Psoas muscle (tissue), 8 donors: ENCODE measurements at regions of chr21 and their contacts with region 1.

Region 1: GRCh38 chr21:45287438-45288391 is at the start of gene POFUT2:
- DNase-seq: peak; percentile 97 to 99
- ATAC-seq: peak; percentile 92 to 96 (median 94)
- H3K4me3 ChIP-seq: peak within 1 kb of the TSS; percentile 75
- H3K27ac ChIP-seq: peak within 1 kb of the TSS; percentile 71
- H3K4me1 ChIP-seq: peaks cover 16% of the 10 kb centered on the region
- H3K27me3 ChIP-seq: no peaks in the 10 kb centered on the region
- CTCF ChIP-seq: no peak
- total RNA-seq, gene POFUT2: 5.6 to 13.9 (median 9.4) TPM

Region 2: GRCh38 chr21:44939532-44940115 is 348.1 kb before region 1 on chr21 and contains the start of gene SLX9:
- intact Hi-C with region 1: loop called (anchors 5 to 10 kb)
- DNase-seq: peak; percentile 80 to 89
- ATAC-seq: peak; percentile 92 to 98 (median 95)
- H3K4me3 ChIP-seq: peak within 1 kb of the TSS; percentile 96
- H3K27ac ChIP-seq: peak within 1 kb of the TSS; percentile 78
- H3K4me1 ChIP-seq: peaks cover 17% of the 10 kb centered on the region
- H3K27me3 ChIP-seq: no peaks in the 10 kb centered on the region
- CTCF ChIP-seq: no peak
- total RNA-seq, gene SLX9: 26.3 to 58.0 (median 32.5) TPM

Region 3: GRCh38 chr21:45439161-45439872 is 151.6 kb after region 1 on chr21:
- intact Hi-C with region 1: loop called (anchors 1 to 2 kb)
- DNase-seq: peak; percentile 84 to 92
- ATAC-seq: peak; percentile 83 to 96 (median 88)
- H3K4me3 ChIP-seq: peak overlapping the region; percentile 60
- H3K27ac ChIP-seq: peak overlapping the region; percentile 64
- H3K4me1 ChIP-seq: peaks cover 11% of the 10 kb centered on the region
- H3K27me3 ChIP-seq: peaks cover 0 to 28% (median 0%) of the 10 kb centered on the region in 3 donors
- CTCF ChIP-seq: peak; percentile 98

Region 4: DNA sequence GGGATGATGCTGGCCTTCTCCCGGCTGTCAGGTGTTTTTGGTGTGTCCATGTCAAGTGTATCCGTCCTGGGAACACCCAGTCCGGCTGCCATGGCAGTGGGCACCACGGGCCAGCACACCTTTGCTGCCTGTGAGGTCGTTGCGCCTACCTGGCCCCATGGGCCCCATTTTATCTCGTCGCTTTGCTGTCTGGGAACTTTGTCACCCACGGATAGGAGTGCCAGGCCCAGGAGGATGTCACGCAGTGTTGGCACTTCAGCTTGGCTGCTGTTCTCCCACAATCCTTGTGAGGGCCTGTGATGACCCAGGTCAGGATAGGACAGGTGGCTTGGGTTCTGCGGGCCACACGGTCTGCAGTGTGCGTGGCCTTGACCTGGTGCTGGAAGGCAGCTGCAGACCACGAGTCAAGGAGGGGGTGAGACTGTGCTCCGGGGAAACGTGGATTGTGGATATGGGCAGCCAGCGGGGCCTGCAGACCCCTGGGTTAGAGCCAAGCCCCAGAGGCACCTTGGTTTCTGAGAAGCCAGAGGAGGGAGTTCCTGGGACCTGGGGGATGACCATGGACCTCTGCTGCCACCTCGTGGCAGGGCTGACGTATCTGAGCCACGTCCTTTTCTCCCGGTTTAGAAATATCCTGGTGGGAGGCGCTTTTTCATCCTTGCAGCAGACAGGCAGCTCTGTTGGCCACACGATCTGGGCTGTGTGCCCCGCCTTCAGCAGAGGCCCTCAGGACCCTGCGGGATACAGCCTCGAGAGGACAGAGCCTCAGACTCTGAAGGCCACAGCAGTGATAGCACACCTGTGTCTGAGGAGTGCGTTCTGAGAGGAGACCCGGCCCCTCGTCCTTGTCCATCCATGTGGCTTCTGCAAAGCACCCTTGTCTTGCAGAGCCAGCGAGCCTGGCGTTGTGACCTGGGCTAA is 532.7 kb after region 1 on chr21:
- intact Hi-C with region 1: loop called in 1 of 2 experiments (anchors 10 kb)
- DNase-seq: peak; percentile 71 to 84
- ATAC-seq: peak; percentile 72 to 85 (median 78)
- H3K4me3 ChIP-seq: no peak overlapping the region
- H3K27ac ChIP-seq: no peak overlapping the region
- H3K4me1 ChIP-seq: no peaks in the 10 kb centered on the region
- H3K27me3 ChIP-seq: peaks cover 0 to 33% (median 7%) of the 10 kb centered on the region in 3 donors
- CTCF ChIP-seq: peak; percentile 78